OCI-LY7 (cell line): ENCODE measurements at regions of chr16 and their contacts with region 1.

Region 1: GRCh38 chr16:65618333-65618732 is 496.5 kb upstream of the CDH11 start:
- DNase-seq: peak; percentile 84
- H3K4me3 ChIP-seq: no peak overlapping the region
- H3K27ac ChIP-seq: peak overlapping the region; percentile 94
- H3K4me1 ChIP-seq: peaks cover 71% of the 10 kb centered on the region
- CTCF ChIP-seq: no peak

Region 2: DNA sequence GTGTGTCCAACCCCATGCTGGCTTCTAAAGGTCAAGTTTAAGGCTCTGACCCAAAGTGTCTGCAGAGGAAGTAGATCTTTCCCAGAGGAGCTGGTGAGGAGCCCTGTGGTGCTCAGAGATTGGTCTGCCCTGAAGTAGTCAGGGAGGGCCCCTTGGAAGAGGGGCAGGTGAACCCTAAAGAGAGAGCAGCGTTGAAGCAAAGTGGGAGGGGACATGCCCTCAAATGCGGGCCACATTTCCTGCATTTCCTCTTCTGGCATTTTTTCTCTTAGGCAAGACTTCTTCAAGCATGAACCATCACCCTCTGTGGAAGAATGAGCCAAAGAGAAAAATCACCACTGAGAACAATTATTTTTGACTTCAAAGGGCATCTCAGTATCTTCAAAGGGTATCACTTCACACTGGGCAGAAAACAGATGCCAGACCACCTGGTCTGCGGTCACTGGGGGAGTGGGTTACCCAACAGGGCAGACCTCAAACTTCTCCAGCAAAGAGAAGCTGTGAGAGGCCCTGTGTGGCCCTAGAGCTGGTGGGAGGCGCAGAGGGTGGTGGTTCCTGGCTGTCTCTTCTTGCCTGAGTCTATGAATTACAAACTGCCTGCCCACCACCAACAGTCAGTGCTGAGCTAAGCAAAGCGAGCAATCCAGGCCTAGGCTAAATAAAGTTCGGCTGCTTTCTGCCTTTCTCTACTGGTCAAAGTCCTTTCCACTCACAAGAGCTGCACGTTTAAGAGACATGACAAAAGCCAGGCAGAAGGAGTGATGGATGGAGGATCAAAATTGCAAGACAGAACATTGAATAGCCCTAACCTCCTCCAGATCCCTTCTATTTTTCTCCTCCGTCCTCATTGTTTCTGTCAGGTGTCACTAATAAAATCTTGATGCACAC is 145.3 kb after region 1 on chr16:
- CTCF ChIA-PET with region 1: no interaction called
- POLR2A ChIA-PET with region 1: interaction called, 4 read pairs
- intact Hi-C with region 1: loop called (anchors 2 kb)
- DNase-seq: peak; percentile 91
- H3K4me3 ChIP-seq: peak overlapping the region; percentile 36
- H3K27ac ChIP-seq: peak overlapping the region; percentile 90
- H3K4me1 ChIP-seq: peaks cover 63% of the 10 kb centered on the region
- CTCF ChIP-seq: no peak